MCF 10A (cell line): ENCODE measurements at regions of chr7 and their contacts with region 1.

Region 1: DNA sequence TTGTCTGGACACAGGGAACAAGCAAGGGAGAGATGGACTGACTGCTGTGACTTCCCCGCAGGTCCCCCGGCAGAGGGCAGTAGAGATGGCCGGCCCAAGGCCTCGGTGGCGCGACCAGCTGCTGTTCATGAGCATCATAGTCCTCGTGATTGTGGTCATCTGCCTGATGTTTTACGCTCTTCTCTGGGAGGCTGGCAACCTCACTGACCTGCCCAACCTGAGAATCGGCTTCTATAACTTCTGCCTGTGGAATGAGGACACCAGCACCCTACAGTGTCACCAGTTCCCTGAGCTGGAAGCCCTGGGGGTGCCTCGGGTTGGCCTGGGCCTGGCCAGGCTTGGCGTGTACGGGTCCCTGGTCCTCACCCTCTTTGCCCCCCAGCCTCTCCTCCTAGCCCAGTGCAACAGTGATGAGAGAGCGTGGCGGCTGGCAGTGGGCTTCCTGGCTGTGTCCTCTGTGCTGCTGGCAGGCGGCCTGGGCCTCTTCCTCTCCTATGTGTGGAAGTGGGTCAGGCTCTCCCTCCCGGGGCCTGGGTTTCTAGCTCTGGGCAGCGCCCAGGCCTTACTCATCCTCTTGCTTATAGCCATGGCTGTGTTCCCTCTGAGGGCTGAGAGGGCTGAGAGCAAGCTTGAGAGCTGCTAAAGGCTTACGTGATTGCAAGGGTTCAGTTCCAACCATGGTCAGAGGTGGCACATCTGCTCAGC is 6.0 kb downstream of the CYREN start:
- DNase-seq: no peak
- H3K4me3 Mint-ChIP-seq: no peak overlapping the region
- H3K27ac Mint-ChIP-seq: no peak overlapping the region
- H3K4me1 Mint-ChIP-seq: peaks cover 25% of the 10 kb centered on the region
- H3K27me3 Mint-ChIP-seq: no peaks in the 10 kb centered on the region
- CTCF ChIP-seq: no peak

Region 2: DNA sequence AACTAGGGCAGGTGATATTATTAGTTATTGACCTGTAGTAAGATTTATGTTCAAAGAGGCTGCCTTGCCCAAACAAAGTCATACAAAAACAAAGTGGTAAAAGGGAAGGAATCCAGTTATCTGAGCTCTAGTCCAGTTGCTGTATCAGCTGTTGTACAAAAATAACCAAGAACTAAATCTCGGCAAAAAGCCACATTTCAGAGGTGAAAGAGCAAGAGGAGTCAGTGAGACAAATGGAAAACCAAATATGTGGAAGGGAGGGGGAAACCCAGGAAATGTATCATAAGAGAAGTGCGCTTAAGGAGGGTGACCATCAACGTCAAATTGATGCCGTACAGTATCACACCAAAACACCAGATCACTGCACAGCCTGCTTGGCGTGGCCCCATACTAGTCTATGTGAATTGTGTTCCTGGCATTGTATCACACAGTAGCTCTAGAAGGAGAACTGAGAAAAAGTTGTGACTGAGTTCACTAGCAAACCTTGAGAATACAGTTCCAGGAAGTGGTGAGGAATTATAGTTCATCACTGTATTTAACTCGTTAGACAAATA is 171.8 kb before region 1 on chr7:
- CTCF ChIA-PET with region 1: interaction called, 5 read pairs
- POLR2A ChIA-PET with region 1: interaction called, 62 read pairs
- intact Hi-C with region 1: loop called (anchors 5 kb)
- DNase-seq: no peak
- H3K4me3 Mint-ChIP-seq: no peak overlapping the region
- H3K27ac Mint-ChIP-seq: no peak overlapping the region
- H3K4me1 Mint-ChIP-seq: no peaks in the 10 kb centered on the region
- H3K27me3 Mint-ChIP-seq: no peaks in the 10 kb centered on the region
- CTCF ChIP-seq: no peak

Region 3: GRCh38 chr7:135991322-135991721 is 826.8 kb after region 1 on chr7:
- CTCF ChIA-PET with region 1: no interaction called
- POLR2A ChIA-PET with region 1: no interaction called
- intact Hi-C with region 1: no loop called
- DNase-seq: no peak
- H3K4me3 Mint-ChIP-seq: no peak overlapping the region
- H3K27ac Mint-ChIP-seq: no peak overlapping the region
- H3K4me1 Mint-ChIP-seq: no peaks in the 10 kb centered on the region
- H3K27me3 Mint-ChIP-seq: no peaks in the 10 kb centered on the region
- CTCF ChIP-seq: no peak